ENCODE measurements at regions of chr17 and their contacts with region 1.

Region 1: GRCh38 chr17:42322382-42323267 is 34.3 kb downstream of the STAT5A start:
- DNase-seq: peak; percentile 94 to 99
- H3K4me3 ChIP-seq: no peak overlapping the region
- CTCF ChIP-seq: peak in 1 of 3 donors; percentile 98
- POLR2A ChIP-seq: no peak

Region 2: DNA sequence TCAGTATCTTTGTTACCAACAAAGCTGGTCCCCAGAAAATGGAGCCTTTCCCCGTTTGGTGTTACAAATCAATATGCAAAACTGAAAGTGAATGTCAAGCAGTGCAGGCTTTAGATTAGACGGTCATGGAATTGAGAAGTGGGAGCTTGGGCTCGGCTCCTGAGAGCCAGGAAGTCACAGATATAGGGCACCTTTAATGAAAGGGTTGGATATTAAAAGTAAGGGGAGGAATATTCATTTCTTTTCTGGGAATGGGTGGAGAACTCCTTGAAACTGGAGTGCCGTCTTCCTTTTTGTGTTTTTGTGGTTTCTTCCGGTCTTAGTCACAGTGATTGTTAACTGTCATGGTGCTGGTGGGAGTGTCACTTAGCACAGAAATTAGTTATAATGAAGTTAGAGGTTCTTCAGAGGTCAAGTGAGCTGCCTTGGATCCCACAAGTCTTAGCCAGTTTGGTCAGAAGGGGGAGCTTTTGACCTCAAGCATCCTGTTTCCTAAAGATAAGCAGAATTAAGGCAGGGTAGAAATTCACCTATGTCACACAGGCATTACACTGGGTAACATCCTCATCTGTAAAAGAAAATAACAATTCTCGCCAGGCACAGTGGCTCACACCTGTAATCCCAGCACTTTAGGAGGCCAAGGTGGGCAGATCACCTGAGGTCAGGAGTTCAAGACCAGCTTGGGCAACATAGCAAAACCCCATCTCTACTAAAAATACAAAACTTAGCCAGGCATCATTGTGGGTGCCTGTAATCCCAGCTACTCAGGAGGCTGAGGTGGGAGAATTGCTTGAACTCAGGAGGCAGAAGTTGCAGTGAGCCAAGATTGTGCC is 643.5 kb before region 1 on chr17:
- intact Hi-C with region 1: no loop called
- DNase-seq: no peak
- H3K4me3 ChIP-seq: no peak overlapping the region
- CTCF ChIP-seq: no peak
- POLR2A ChIP-seq: no peak

Region 3: DNA sequence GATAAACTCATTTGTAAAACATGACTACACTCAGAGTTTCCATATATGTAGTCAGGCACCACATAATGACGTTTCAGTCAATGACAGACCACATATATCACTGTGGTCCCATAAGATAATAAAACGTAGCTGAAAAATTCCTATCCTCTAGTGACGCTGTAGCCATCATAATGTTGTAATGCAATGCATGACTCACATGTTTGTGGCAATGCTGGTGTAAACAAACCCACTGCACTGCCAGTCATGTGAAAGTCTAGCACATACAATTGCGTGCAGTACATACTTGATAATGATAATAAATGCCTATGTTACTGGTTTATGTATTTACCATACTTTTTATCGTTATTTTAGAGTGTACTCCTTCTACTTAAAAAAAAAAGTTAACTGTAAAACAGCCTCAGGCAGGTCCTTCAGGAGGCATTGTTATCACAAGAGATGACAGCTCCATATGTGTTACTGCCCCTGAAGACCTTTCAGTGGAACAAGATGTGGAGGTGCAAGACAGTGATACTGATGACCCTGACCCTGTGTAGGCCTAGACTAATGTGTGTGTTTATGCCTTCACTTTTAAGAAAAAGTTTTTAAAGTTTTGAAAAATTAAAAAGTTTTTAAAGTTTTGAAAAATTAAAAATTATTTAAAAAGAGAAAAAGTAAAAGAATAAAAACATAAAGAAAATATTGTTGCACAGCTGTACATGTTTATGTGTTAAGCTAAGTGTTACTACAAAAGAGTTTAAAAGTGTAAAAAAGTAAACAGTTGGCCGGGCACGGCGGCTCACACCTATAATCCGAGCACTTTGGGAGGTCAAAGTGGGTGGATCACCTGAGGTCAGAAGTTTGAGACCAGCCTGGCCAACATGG is 55.5 kb before region 1 on chr17:
- intact Hi-C with region 1: no loop called
- DNase-seq: no peak
- H3K4me3 ChIP-seq: no peak overlapping the region
- CTCF ChIP-seq: no peak
- POLR2A ChIP-seq: no peak

Region 4: GRCh38 chr17:42403150-42403549 is 80.5 kb after region 1 on chr17:
- intact Hi-C with region 1: loop called (anchors 5 kb)
- DNase-seq: no peak
- H3K4me3 ChIP-seq: no peak overlapping the region
- CTCF ChIP-seq: no peak
- POLR2A ChIP-seq: no peak

Region 5: DNA sequence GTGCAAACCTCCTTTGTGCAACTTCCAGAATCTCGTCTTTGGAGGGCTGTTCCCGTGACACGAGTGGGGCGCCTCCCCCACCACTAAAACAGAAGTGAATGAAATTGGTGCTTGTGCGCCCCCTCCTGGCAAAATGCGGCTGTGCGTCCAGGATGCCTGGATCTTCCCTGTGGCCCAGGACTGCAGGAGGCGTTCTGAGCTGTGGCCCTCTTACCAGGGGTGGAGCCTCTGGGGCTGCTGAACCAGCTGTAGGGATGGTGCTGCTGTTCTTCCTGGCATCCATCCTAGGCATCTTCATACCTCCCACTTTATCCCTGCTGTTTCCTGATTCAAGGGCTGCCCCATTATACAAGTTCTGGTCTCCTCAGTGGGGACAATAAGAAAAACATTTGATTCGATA is 194.9 kb after region 1 on chr17:
- intact Hi-C with region 1: loop called (anchors 5 kb)
- DNase-seq: peak; percentile 88 to 98
- H3K4me3 ChIP-seq: no peak overlapping the region
- CTCF ChIP-seq: peak in 1 of 3 donors; percentile 95
- POLR2A ChIP-seq: no peak